ENCODE measurements at regions of chr5 and their contacts with region 1.

Region 1: DNA sequence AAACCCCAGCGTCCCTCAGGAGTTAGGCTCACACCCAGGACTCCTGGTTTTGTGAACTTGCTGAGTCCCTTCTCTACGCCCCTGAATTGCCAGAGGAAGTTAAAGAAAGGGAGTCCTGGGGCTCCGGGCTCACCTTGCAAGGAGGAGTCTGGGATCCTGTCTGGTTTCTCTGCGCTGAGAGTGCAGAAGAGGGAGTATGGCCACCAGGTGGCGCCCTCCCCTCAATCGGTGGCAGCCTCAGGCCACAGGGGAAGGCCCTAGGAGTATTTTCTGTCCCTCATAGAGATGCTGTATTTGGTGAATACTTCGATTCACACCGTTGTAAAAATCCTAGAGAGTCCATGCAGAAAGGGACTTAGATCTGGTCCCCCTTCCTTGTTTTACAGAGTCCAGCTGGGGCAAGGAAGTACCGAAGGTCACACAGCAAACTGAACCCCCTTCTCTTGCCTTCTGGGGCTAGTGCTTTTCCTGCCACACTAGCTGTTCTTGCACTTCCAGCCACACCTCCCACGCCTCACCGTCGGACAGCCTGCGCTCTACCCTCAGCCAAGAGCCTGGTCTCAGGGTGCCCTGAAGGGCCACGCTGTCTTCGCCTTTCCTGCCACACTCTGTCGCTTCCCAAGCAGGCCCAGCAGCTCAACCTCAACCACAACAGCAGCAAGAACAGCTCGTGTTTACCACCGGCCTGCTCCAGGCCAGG is 10.2 kb downstream of the HAND1 start:
- DNase-seq: peak; percentile 81
- H3K4me3 Mint-ChIP-seq: no peak overlapping the region
- H3K27ac Mint-ChIP-seq: no peak overlapping the region
- H3K4me1 Mint-ChIP-seq: peaks cover 4% of the 10 kb centered on the region
- H3K27me3 Mint-ChIP-seq: peaks cover 58% of the 10 kb centered on the region

Region 2: DNA sequence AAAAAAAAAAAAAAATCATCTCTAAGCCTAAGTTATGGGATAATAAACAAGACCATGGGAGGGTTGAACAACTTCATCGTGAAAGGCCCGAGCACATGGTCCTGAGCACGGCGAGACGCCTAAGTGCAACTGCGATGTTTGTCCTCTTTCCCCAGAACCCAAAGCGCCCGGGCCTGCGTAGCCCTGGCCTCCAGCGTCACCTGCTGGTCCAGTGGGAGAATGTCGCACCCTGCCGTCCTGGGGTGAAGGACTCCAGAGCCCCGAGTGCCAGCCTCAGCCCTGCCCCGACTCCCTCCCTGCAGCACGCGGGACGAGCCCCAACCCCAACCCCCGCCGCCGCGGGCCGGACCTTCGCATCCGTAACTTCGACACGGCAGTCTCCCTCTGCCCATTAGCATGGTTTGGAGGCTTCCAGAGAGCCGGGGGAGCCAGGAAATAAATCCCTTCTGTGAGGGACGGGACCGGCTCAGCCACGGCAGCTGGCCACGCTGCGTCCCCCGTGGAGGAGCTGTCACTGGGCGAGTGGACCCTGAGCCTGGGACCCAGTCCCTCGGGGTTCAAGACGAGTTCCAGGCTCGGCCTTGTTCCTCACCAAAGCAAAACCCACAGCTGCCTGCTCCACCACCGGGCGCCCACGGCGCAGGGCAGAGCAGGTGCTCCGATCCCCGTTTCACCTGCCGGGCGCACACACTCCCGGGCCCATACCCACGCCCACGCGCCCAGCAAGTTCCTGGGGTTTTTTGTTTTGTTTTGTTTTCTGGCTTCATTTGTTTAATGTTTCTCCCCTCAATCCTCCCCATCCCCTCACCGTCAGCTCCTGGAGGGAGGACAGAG is 142.7 kb after region 1 on chr5:
- CTCF ChIA-PET with region 1: interaction called, 25 read pairs
- DNase-seq: peak; percentile 74
- H3K4me3 Mint-ChIP-seq: peak overlapping the region; percentile 5
- H3K27ac Mint-ChIP-seq: no peak overlapping the region
- H3K4me1 Mint-ChIP-seq: peaks cover 6% of the 10 kb centered on the region
- H3K27me3 Mint-ChIP-seq: peaks cover 84% of the 10 kb centered on the region